ENCODE measurements at regions of chr15 and their contacts with region 1.

Region 1: GRCh38 chr15:31365655-31366127 is 39.1 kb downstream of the KLF13 start:
- DNase-seq: peak; percentile 48
- ATAC-seq: peak; percentile 48
- H3K4me3 Mint-ChIP-seq: peak overlapping the region; percentile 67
- H3K27ac Mint-ChIP-seq: peak overlapping the region; percentile 66
- H3K4me1 Mint-ChIP-seq: peaks cover 99% of the 10 kb centered on the region
- H3K27me3 Mint-ChIP-seq: no peaks in the 10 kb centered on the region
- CTCF ChIP-seq: no peak

Region 2: DNA sequence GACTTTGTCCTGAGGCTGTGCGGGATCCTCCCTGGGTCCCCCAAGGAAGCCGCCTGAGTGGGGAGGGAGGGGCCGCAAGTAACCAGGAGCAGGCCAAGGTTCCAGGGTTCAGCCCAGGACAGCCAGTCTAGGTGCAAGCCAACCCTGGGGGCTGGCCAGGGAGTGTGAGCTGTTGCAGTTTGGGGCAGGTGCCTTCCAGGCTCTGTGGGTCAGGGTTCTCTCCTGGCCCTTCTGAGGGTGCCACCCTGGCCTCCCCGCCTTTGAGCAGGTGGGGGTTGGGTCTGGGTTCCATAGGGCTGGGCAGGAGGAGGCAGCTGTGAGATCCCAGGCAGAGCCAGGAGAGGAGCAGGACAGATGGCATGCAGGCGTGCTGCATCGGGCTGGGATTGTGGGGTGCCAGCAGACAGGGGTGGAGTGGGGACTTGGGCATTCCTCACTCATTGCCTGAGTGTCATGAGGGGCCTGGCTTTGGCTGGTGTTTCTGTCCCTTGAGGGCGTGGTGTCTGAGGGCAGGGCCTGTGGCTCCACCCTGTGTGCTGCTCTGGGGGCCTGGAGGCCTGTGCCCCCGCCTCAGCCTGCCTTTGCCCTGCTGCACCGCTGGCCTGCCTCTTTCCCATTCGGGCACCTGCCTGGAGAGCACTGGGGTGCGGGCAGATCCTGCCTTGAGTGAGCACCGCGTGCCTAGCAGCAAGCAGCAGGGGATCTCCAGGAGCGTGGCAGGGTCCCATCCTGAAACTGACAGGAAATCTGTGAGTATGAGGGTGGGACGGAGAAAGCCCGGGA is 20.7 kb before region 1 on chr15:
- CTCF ChIA-PET with region 1: interaction called, 3 read pairs
- POLR2A ChIA-PET with region 1: interaction called, 14 read pairs
- intact Hi-C with region 1: no loop called
- DNase-seq: peak; percentile 41
- ATAC-seq: peak; percentile 67
- H3K4me3 Mint-ChIP-seq: peak overlapping the region; percentile 88
- H3K27ac Mint-ChIP-seq: peak overlapping the region; percentile 91
- H3K4me1 Mint-ChIP-seq: peaks cover 100% of the 10 kb centered on the region
- H3K27me3 Mint-ChIP-seq: no peaks in the 10 kb centered on the region
- CTCF ChIP-seq: no peak

Region 3: GRCh38 chr15:31352911-31353811 is 12.5 kb before region 1 on chr15:
- CTCF ChIA-PET with region 1: interaction called, 7 read pairs
- POLR2A ChIA-PET with region 1: interaction called, 14 read pairs
- intact Hi-C with region 1: loop called (anchors 1 kb)
- DNase-seq: peak; percentile 50
- ATAC-seq: peak; percentile 71
- H3K4me3 Mint-ChIP-seq: peak overlapping the region; percentile 68
- H3K27ac Mint-ChIP-seq: peak overlapping the region; percentile 84
- H3K4me1 Mint-ChIP-seq: peaks cover 100% of the 10 kb centered on the region
- H3K27me3 Mint-ChIP-seq: no peaks in the 10 kb centered on the region
- CTCF ChIP-seq: no peak

Region 4: GRCh38 chr15:31400222-31400927 is 34.7 kb after region 1 on chr15:
- CTCF ChIA-PET with region 1: no interaction called
- POLR2A ChIA-PET with region 1: no interaction called
- intact Hi-C with region 1: no loop called
- DNase-seq: no peak
- ATAC-seq: no peak
- H3K4me3 Mint-ChIP-seq: no peak overlapping the region
- H3K27ac Mint-ChIP-seq: no peak overlapping the region
- H3K4me1 Mint-ChIP-seq: peaks cover 15% of the 10 kb centered on the region
- H3K27me3 Mint-ChIP-seq: no peaks in the 10 kb centered on the region
- CTCF ChIP-seq: no peak